Right cardiac atrium (tissue), 5 donors: ENCODE measurements at regions of chr3 and their contacts with region 1.

Region 1: DNA sequence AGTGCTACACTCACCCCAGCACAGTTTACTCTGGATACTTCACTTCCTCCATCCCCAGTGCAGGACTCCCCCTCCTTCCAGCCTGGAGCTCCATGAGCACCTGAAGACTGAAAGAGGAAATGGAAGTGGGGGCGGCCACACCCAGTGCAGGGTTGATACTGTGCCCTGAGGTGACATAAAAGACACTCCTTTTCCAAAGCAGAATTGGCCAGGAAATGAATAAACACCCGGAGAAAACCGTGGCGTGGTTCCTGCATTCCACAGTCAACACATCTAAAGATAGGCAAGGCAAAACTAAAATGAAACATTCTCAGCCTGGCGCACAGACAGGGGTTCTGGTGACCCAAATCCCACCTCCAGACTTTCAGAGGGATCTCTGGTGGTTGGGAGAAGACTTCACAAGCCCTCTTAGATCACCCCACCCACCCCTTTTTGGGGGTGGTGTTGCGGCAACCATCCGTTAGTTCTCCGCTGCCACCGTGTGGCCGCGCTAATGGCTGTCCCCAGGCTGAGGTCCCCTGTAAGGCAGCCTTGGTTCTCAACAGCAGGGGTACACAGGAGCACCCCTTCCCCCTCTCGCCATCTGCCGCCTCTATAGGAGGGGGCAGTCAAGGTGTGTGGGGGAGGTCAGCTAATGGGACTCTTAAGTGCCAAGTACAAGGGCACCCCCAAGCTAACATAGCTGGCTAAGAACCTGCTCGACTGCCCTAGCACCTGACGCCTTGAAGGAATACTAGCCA is 2.5 kb upstream of the MST1R start:
- DNase-seq: peak; percentile 54 to 82 (median 77)
- ATAC-seq: peak; percentile 55 to 59
- H3K4me3 ChIP-seq: no peak overlapping the region
- H3K27ac ChIP-seq: no peak overlapping the region
- H3K4me1 ChIP-seq: no peaks in the 10 kb centered on the region
- H3K27me3 ChIP-seq: no peaks in the 10 kb centered on the region

Region 2: GRCh38 chr3:49802719-49803464 is 103.3 kb before region 1 on chr3 and contains the start of gene INKA1:
- intact Hi-C with region 1: loop called in 3 of 4 experiments (anchors 2 to 10 kb)
- DNase-seq: peak; percentile 91 to 96 (median 95)
- ATAC-seq: peak; percentile 82 to 84
- H3K4me3 ChIP-seq: peak within 1 kb of the TSS; percentile 49
- H3K27ac ChIP-seq: peak within 1 kb of the TSS; percentile 79
- H3K4me1 ChIP-seq: peaks cover 33% of the 10 kb centered on the region
- H3K27me3 ChIP-seq: no peaks in the 10 kb centered on the region
- total RNA-seq, gene INKA1: 2.2 to 6.4 (median 4.6) TPM

Region 3: GRCh38 chr3:49839193-49839809 is 66.9 kb before region 1 on chr3:
- intact Hi-C with region 1: loop called in 2 of 4 experiments (anchors 2 to 5 kb)
- DNase-seq: peak; percentile 75 to 91 (median 87)
- ATAC-seq: peak; percentile 84 to 86
- H3K4me3 ChIP-seq: no peak overlapping the region
- H3K27ac ChIP-seq: no peak overlapping the region
- H3K4me1 ChIP-seq: peaks cover 4% of the 10 kb centered on the region
- H3K27me3 ChIP-seq: no peaks in the 10 kb centered on the region